Tibial artery (tissue), 4 donors: ENCODE measurements at regions of chr11 and their contacts with region 1.

Region 1: DNA sequence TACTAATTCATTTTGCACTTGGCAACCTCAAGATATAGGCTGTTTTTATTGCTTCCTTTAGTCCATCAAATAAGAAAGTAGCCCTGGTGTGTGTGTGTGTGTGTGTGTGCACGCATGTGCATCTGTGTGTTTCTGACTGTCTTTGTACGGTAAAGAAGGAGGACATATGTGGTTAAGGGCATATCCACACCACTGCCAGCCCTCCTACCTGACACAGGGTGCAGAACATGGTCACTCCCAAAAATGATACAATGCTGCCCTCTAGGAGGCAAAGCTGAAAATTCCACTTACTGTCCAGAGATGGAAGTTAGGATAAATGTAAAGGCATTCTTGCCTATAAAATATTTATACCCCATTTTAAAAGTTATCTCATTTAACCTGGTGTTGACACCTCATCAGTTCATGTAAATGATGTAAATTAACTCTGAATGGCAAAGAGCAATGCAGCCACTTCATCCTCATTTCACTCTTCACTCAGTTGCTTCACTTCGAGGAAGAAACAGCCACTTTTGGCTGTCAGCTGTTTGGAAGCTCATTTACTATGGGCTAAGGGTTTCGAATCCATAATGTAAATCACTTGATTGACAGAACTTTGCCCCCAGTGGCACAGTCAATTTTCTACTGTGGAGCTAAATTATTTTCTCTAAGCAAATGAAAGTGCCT is 83.1 kb upstream of the MTNR1B start:
- DNase-seq: no peak
- H3K4me3 ChIP-seq: no peak overlapping the region
- H3K27ac ChIP-seq: no peak overlapping the region
- H3K4me1 ChIP-seq: no peaks in the 10 kb centered on the region
- H3K27me3 ChIP-seq: no peaks in the 10 kb centered on the region
- CTCF ChIP-seq: peak; percentile 62 to 69

Region 2: GRCh38 chr11:92211576-92212167 is 674.7 kb before region 1 on chr11:
- intact Hi-C with region 1: loop called (anchors 10 kb)
- DNase-seq: peak in 1 of 2 donors; percentile 68
- H3K4me3 ChIP-seq: no peak overlapping the region
- H3K27ac ChIP-seq: no peak overlapping the region
- H3K4me1 ChIP-seq: no peaks in the 10 kb centered on the region
- H3K27me3 ChIP-seq: no peaks in the 10 kb centered on the region
- CTCF ChIP-seq: peak; percentile 57 to 65